Mucosa of descending colon (tissue), 3 donors: ENCODE measurements at regions of chr5 and their contacts with region 1.

Region 1: GRCh38 chr5:65925601-65926275 is 637 bp upstream of the ERBIN start:
- DNase-seq: peak; percentile 80 to 88 (median 87)
- ATAC-seq: peak; percentile 89
- H3K4me3 ChIP-seq: peak overlapping the region; percentile 88
- H3K4me1 ChIP-seq: peaks cover 17% of the 10 kb centered on the region
- CTCF ChIP-seq: no peak

Region 2: DNA sequence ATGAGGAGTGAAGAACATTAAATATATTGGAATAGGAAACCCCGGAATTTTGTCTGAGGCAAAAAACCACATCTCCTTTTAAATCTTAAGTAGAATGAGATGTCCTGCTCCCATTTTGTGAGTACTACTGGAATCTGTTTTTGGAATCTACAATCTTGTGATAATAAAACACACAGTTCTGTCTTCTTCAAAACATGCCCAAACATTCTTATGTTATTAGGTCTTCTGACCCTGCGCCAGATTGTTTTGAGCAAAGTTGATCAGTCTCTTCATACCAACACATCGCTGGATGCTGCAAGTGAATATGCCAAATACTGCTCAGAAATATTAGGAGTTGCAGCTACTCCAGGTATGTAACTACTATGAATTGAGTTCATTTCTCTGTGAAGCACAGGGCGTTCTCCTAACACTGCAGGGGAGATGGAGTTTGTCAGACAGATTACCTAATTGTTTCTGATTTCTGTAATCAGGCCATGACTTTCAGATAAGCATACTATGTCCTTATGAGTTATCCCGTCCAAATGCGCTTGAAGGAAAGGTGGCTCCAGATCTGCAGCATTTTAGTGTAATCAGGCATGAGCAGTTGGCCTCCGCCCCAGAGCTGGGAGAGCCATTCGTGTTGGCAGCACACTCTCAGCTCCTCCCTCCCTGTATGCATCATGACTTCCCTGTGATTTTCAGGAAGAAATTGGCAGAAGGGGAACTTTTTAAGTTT is 115.8 kb before region 1 on chr5:
- intact Hi-C with region 1: loop called in 1 of 2 experiments (anchors 5 kb)
- DNase-seq: peak; percentile 83 to 87 (median 84)
- ATAC-seq: peak; percentile 78
- H3K4me3 ChIP-seq: no peak overlapping the region
- H3K4me1 ChIP-seq: peaks cover 19% of the 10 kb centered on the region
- CTCF ChIP-seq: no peak

Region 3: GRCh38 chr5:65861830-65862241 is 63.9 kb before region 1 on chr5:
- intact Hi-C with region 1: no loop called
- DNase-seq: no peak
- ATAC-seq: no peak
- H3K4me3 ChIP-seq: no peak overlapping the region
- H3K4me1 ChIP-seq: no peaks in the 10 kb centered on the region
- CTCF ChIP-seq: no peak

Region 4: GRCh38 chr5:66144074-66144833 is 218.5 kb after region 1 on chr5 and contains the start of gene SREK1:
- intact Hi-C with region 1: loop called (anchors 5 kb)
- DNase-seq: peak; percentile 94 to 96 (median 95)
- ATAC-seq: peak; percentile 95
- H3K4me3 ChIP-seq: peak within 1 kb of the TSS; percentile 66
- H3K4me1 ChIP-seq: peaks cover 26% of the 10 kb centered on the region
- CTCF ChIP-seq: no peak
- total RNA-seq, gene SREK1: 55.7 to 67.8 (median 66.5) TPM

Region 5: DNA sequence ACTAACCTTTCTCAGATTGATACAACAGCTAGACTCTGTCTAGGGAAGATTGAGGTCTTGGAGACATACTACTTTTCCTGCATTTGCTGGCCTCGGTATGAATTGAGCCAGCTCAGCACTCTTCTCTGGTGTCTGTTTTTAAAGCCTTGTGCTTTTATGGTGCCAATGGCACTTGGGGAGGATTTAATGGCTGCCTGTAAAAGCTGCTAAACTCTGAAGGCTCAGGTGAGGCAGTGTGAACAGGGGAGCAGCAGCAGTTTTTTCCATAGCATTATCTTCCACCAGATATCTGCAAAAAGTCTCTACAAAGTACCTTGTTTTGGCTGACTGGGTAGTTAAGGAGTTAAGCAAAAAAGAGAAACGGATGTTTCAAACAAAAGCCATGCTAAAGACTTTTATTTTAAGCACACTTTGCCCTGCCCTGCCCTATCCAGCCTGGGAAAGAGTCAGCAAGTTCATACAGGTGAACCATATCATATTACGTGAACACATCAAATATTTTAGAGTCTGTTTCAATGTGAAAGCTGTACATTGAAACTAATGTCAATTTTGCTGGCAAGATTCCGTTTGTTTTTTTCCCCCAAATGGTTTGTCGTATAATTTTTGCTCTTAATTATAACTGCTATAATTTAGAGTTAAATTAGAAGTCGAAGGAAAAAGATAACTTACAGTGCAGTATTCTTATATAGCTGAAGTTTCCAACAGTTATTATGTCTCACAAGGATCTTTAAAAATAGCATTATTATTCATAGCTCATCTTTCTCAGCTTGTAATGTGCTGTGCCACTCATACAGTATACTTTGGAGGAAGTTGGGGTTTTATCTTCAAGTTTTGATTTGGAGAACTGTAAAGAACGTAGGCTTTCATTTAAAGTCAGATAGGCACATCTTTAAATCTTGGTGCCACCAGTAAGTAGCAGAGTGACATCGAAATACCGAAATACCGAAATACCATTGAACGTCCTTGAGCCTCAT is 1695.0 kb after region 1 on chr5:
- intact Hi-C with region 1: no loop called
- DNase-seq: peak in 1 of 3 donors; percentile 48
- ATAC-seq: peak; percentile 86
- H3K4me3 ChIP-seq: no peak overlapping the region
- H3K4me1 ChIP-seq: no peaks in the 10 kb centered on the region
- CTCF ChIP-seq: no peak